CD4-positive, alpha-beta memory T cell (primary cell): ENCODE measurements at regions of chr11 and their contacts with region 1.

Region 1: GRCh38 chr11:65329944-65330403 is 3.7 kb upstream of the DPF2 start:
- DNase-seq: peak; percentile 69 to 81 (median 75)
- H3K4me3 ChIP-seq: no peak overlapping the region
- H3K4me3 Mint-ChIP-seq: peak overlapping the region in 3 of 8 donors; percentile 28 to 64 (median 43)
- H3K27ac ChIP-seq: no peak overlapping the region
- H3K27ac Mint-ChIP-seq: peak overlapping the region in 4 of 7 donors; percentile 53 to 86 (median 68)
- H3K4me1 ChIP-seq: peaks cover 11% of the 10 kb centered on the region
- H3K4me1 Mint-ChIP-seq: peaks cover 8 to 22% (median 14%) of the 10 kb centered on the region in 4 donors
- H3K27me3 ChIP-seq: no peaks in the 10 kb centered on the region
- H3K27me3 Mint-ChIP-seq: peaks cover 0 to 2% of the 10 kb centered on the region in 2 donors

Region 2: GRCh38 chr11:65150509-65151271 is 179.3 kb before region 1 on chr11:
- CTCF ChIA-PET with region 1: no interaction called
- POLR2A ChIA-PET with region 1: no interaction called
- intact Hi-C with region 1: no loop called
- DNase-seq: no peak
- H3K4me3 ChIP-seq: no peak overlapping the region
- H3K4me3 Mint-ChIP-seq: no peak overlapping the region
- H3K27ac ChIP-seq: no peak overlapping the region
- H3K27ac Mint-ChIP-seq: peak overlapping the region in 2 of 7 donors; percentile 10 to 65
- H3K4me1 ChIP-seq: no peaks in the 10 kb centered on the region
- H3K4me1 Mint-ChIP-seq: peaks cover 0 to 4% (median 1%) of the 10 kb centered on the region in 4 donors
- H3K27me3 ChIP-seq: no peaks in the 10 kb centered on the region
- H3K27me3 Mint-ChIP-seq: no peaks in the 10 kb centered on the region

Region 3: GRCh38 chr11:65225279-65226102 is 104.5 kb before region 1 on chr11:
- CTCF ChIA-PET with region 1: interaction called, 67 read pairs
- POLR2A ChIA-PET with region 1: interaction called, 4 read pairs
- intact Hi-C with region 1: loop called (anchors 5 kb)
- DNase-seq: peak; percentile 48 to 75 (median 58)
- H3K4me3 ChIP-seq: no peak overlapping the region
- H3K4me3 Mint-ChIP-seq: peak overlapping the region; percentile 56 to 86 (median 74)
- H3K27ac ChIP-seq: no peak overlapping the region
- H3K27ac Mint-ChIP-seq: peak overlapping the region in 2 of 7 donors; percentile 8 to 13
- H3K4me1 ChIP-seq: peaks cover 13% of the 10 kb centered on the region
- H3K4me1 Mint-ChIP-seq: peaks cover 6 to 13% (median 7%) of the 10 kb centered on the region in 4 donors
- H3K27me3 ChIP-seq: peaks cover 7% of the 10 kb centered on the region
- H3K27me3 Mint-ChIP-seq: peaks cover 5 to 14% of the 10 kb centered on the region in 2 donors

Region 4: GRCh38 chr11:65261591-65262380 is 68.2 kb before region 1 on chr11 and contains the start of gene POLA2:
- CTCF ChIA-PET with region 1: interaction called, 11 read pairs
- POLR2A ChIA-PET with region 1: interaction called, 11 read pairs
- intact Hi-C with region 1: loop called (anchors 1 kb)
- DNase-seq: peak; percentile 95 to 98 (median 98)
- H3K4me3 ChIP-seq: peak within 1 kb of the TSS; percentile 67 to 99
- H3K4me3 Mint-ChIP-seq: peak within 1 kb of the TSS; percentile 92 to 97 (median 93)
- H3K27ac ChIP-seq: peak within 1 kb of the TSS; percentile 92
- H3K27ac Mint-ChIP-seq: peak within 1 kb of the TSS; percentile 94 to 97 (median 96)
- H3K4me1 ChIP-seq: peaks cover 23% of the 10 kb centered on the region
- H3K4me1 Mint-ChIP-seq: peaks cover 28 to 67% (median 36%) of the 10 kb centered on the region in 4 donors
- H3K27me3 ChIP-seq: no peaks in the 10 kb centered on the region
- H3K27me3 Mint-ChIP-seq: no peaks in the 10 kb centered on the region
- total RNA-seq, gene POLA2: 26.4 to 27.3 TPM

Region 5: DNA sequence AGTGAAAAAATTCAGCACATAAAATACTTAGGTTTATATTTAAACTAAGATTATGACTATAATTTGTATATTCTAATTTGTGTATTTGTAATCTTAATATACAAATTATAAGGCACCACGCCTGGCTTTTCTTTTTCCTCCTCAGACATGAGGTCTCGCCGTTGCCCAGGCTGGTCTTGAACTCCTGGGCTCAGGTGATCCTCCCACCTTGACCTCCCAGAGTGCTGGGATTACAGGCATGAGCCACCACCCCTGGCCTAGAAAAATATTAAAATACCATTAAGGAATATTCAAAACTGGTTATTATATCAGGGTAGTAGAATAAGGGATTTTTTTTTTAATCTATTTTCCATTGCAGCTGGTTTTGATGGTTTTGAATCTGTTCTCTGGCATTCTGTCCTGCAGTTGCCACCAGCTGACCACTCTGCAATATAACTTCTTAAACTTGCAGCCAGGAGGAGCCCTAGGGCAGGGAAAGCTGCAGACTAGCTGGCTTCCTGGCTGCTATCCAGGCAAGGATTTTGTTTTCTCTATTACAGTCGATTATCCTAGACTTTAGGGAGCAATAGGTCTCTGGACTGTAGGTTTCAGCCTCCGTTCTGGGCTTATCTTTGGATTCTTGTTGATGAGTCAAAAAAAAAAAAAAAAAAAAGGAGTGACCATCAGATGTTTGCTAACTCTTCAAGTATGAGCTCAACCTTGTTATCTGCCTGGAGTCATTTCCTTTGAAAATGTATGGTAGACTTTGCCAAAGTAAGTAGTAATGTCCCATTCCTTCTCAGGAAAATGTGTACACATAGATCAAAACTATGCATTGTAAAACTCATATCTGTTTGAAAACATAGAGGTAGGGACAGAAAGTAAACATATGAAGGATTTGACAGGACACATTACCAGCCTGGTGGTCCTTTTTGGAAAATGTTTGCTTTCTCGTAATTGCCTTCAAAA is 55.0 kb before region 1 on chr11:
- CTCF ChIA-PET with region 1: interaction called, 56 read pairs
- POLR2A ChIA-PET with region 1: interaction called, 3 read pairs
- intact Hi-C with region 1: no loop called
- DNase-seq: peak; percentile 19 to 39 (median 29)
- H3K4me3 ChIP-seq: no peak overlapping the region
- H3K4me3 Mint-ChIP-seq: no peak overlapping the region
- H3K27ac ChIP-seq: no peak overlapping the region
- H3K27ac Mint-ChIP-seq: peak overlapping the region in 2 of 7 donors; percentile 5 to 11
- H3K4me1 ChIP-seq: peaks cover 8% of the 10 kb centered on the region
- H3K4me1 Mint-ChIP-seq: peaks cover 6 to 12% (median 9%) of the 10 kb centered on the region in 4 donors
- H3K27me3 ChIP-seq: no peaks in the 10 kb centered on the region
- H3K27me3 Mint-ChIP-seq: no peaks in the 10 kb centered on the region

Region 6: DNA sequence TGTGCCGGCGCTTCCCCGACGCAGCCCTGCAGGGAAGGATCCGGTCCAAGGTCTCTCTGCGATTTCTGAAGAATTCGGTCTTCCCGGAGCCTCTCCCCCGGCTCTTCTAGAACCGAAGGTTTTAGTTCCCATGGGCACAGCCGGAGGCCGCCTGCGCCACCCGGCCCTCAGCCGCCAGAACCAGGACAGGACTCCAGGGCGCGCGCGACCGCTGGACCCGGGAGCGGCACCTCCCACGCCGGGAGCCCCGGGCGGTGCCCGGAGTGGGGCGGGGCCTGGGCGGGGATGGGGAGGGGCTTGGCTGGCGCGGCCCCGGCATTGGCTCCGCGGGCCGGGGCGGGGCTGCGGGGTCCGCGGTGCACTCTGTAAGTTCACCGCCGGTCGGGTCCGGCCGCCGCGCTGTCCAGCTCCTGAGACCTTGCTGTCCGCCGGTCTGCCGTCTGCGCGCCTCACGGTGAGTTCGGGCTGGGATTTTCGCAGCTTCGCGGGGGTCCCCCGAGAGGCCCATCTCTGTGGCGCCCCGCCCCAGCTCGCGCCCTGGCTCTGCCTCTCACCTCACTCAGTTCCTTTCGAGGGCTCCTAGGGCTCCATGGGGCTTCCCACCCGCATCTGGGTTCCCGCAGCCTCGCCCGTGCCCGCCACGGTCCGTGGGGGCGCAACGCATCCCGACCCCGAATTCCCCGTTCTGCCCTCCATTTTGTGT is 15.3 kb before region 1 on chr11 and contains the start of gene CDC42EP2:
- CTCF ChIA-PET with region 1: interaction called, 170 read pairs
- POLR2A ChIA-PET with region 1: interaction called, 6 read pairs
- intact Hi-C with region 1: loop called (anchors 1 kb)
- DNase-seq: peak; percentile 51 to 71 (median 58)
- H3K4me3 ChIP-seq: peak within 1 kb of the TSS; percentile 73 to 74
- H3K4me3 Mint-ChIP-seq: peak within 1 kb of the TSS; percentile 72 to 83 (median 76)
- H3K27ac ChIP-seq: peak within 1 kb of the TSS; percentile 49
- H3K27ac Mint-ChIP-seq: peak within 1 kb of the TSS in 1 of 7 donors; percentile 44
- H3K4me1 ChIP-seq: peaks cover 15% of the 10 kb centered on the region
- H3K4me1 Mint-ChIP-seq: peaks cover 4 to 14% (median 7%) of the 10 kb centered on the region in 4 donors
- H3K27me3 ChIP-seq: no peaks in the 10 kb centered on the region
- H3K27me3 Mint-ChIP-seq: no peaks in the 10 kb centered on the region
- total RNA-seq, gene CDC42EP2: 0.55 to 0.67 TPM

Region 7: DNA sequence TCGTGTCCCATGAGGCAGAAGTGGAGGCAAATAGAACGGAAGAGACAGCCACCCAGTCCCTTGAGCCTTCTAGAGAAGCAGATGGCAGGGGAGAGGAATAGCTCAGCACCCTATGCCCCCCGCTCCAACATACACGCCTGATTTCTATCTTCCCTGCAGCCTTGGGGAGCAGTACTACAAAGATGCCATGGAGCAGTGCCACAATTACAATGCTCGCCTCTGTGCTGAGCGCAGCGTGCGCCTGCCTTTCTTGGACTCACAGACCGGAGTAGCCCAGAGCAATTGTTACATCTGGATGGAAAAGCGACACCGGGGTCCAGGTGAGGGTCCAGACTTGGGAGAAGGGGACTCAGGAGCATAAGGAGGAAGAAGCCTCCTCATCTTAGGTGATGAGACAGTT is 10.3 kb after region 1 on chr11:
- CTCF ChIA-PET with region 1: interaction called, 16 read pairs
- POLR2A ChIA-PET with region 1: interaction called, 4 read pairs
- intact Hi-C with region 1: no loop called
- DNase-seq: no peak
- H3K4me3 ChIP-seq: no peak overlapping the region
- H3K4me3 Mint-ChIP-seq: no peak overlapping the region
- H3K27ac ChIP-seq: no peak overlapping the region
- H3K27ac Mint-ChIP-seq: peak overlapping the region in 3 of 7 donors; percentile 25 to 63 (median 40)
- H3K4me1 ChIP-seq: peaks cover 23% of the 10 kb centered on the region
- H3K4me1 Mint-ChIP-seq: peaks cover 22 to 40% (median 26%) of the 10 kb centered on the region in 4 donors
- H3K27me3 ChIP-seq: no peaks in the 10 kb centered on the region
- H3K27me3 Mint-ChIP-seq: no peaks in the 10 kb centered on the region

Region 8: GRCh38 chr11:65354265-65355012 is 24.5 kb after region 1 on chr11 and contains the start of gene TIGD3:
- CTCF ChIA-PET with region 1: interaction called, 8 read pairs
- POLR2A ChIA-PET with region 1: interaction called, 15 read pairs
- intact Hi-C with region 1: loop called (anchors 2 kb)
- DNase-seq: peak; percentile 92 to 97 (median 94)
- H3K4me3 ChIP-seq: peak within 1 kb of the TSS in 1 of 2 donors; percentile 32
- H3K4me3 Mint-ChIP-seq: peak within 1 kb of the TSS; percentile 90 to 97 (median 93)
- H3K27ac ChIP-seq: peak within 1 kb of the TSS; percentile 50
- H3K27ac Mint-ChIP-seq: peak within 1 kb of the TSS; percentile 82 to 96 (median 88)
- H3K4me1 ChIP-seq: peaks cover 7% of the 10 kb centered on the region
- H3K4me1 Mint-ChIP-seq: peaks cover 8 to 17% (median 11%) of the 10 kb centered on the region in 4 donors
- H3K27me3 ChIP-seq: no peaks in the 10 kb centered on the region
- H3K27me3 Mint-ChIP-seq: no peaks in the 10 kb centered on the region
- total RNA-seq, gene TIGD3: 0.96 to 1.1 TPM

Region 9: DNA sequence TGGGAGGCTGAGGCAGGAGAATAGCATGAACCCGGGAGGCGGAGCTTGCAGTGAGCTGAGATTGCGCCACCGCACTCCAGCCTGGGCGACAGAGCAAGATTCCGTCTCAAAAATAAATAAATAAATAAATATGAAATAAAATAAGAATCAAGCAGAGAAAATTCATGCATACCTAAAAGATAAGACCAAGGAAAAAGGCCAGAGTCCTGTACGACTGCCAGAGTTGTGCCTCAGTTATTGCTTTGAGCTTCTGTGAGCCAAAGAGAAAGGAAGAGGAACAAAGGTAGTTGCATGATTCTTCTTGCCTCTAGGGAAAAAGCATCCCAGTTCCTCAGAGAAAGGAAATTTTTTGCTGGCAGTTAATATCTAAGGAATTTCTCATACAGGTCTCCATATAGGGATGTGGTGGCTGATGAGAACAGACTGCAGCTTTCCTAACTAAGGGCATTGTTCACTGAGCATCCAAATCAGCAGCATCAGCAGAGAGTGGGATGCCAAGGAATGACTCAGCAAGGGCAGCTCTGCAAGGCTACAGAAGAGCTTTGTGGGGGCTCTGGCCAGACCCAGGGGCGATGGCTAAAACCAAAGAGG is 151.4 kb after region 1 on chr11:
- CTCF ChIA-PET with region 1: no interaction called
- POLR2A ChIA-PET with region 1: no interaction called
- intact Hi-C with region 1: no loop called
- DNase-seq: no peak
- H3K4me3 ChIP-seq: no peak overlapping the region
- H3K4me3 Mint-ChIP-seq: no peak overlapping the region
- H3K27ac ChIP-seq: no peak overlapping the region
- H3K27ac Mint-ChIP-seq: no peak overlapping the region
- H3K4me1 ChIP-seq: peaks cover 17% of the 10 kb centered on the region
- H3K4me1 Mint-ChIP-seq: peaks cover 7 to 18% (median 11%) of the 10 kb centered on the region in 4 donors
- H3K27me3 ChIP-seq: no peaks in the 10 kb centered on the region
- H3K27me3 Mint-ChIP-seq: peaks cover 0 to 1% of the 10 kb centered on the region in 2 donors